ENCODE measurements at regions of chr6 and their contacts with region 1.

Region 1: DNA sequence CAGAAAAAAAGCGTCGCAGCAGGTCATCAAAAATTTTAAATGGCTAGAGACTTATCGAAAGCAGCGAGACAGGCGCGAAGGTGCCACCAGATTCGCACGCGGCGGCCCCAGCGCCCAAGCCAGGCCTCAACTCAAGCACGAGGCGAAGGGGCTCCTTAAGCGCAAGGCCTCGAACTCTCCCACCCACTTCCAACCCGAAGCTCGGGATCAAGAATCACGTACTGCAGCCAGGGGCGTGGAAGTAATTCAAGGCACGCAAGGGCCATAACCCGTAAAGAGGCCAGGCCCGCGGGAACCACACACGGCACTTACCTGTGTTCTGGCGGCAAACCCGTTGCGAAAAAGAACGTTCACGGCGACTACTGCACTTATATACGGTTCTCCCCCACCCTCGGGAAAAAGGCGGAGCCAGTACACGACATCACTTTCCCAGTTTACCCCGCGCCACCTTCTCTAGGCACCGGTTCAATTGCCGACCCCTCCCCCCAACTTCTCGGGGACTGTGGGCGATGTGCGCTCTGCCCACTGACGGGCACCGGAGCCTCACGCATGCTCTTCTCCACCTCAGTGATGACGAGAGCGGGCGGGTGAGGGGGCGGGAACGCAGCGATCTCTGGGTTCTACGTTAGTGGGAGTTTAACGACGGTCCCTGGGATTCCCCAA is at the start of gene EEF1A1:
- DNase-seq: peak; percentile 95
- H3K4me3 ChIP-seq: peak within 1 kb of the TSS; percentile 88 to 99 (median 94)
- H3K27ac ChIP-seq: peak within 1 kb of the TSS; percentile 99
- H3K4me1 ChIP-seq: peaks cover 23% of the 10 kb centered on the region
- H3K27me3 ChIP-seq: no peaks in the 10 kb centered on the region
- CTCF ChIP-seq: no peak
- polyA plus RNA-seq, gene EEF1A1: 9,858 to 11,226 TPM (median 10,860 TPM) in 3 replicates

Region 2: GRCh38 chr6:73610444-73611275 is 89.8 kb after region 1 on chr6:
- dilution Hi-C with region 1: loop called (anchors 25 kb)
- DNase-seq: no peak
- H3K4me3 ChIP-seq: no peak overlapping the region
- H3K27ac ChIP-seq: no peak overlapping the region
- H3K4me1 ChIP-seq: no peaks in the 10 kb centered on the region
- H3K27me3 ChIP-seq: no peaks in the 10 kb centered on the region
- CTCF ChIP-seq: peak in 2 of 3 experiments; percentile 40 to 46